ENCODE measurements at regions of chr5 and their contacts with region 1.

Region 1: DNA sequence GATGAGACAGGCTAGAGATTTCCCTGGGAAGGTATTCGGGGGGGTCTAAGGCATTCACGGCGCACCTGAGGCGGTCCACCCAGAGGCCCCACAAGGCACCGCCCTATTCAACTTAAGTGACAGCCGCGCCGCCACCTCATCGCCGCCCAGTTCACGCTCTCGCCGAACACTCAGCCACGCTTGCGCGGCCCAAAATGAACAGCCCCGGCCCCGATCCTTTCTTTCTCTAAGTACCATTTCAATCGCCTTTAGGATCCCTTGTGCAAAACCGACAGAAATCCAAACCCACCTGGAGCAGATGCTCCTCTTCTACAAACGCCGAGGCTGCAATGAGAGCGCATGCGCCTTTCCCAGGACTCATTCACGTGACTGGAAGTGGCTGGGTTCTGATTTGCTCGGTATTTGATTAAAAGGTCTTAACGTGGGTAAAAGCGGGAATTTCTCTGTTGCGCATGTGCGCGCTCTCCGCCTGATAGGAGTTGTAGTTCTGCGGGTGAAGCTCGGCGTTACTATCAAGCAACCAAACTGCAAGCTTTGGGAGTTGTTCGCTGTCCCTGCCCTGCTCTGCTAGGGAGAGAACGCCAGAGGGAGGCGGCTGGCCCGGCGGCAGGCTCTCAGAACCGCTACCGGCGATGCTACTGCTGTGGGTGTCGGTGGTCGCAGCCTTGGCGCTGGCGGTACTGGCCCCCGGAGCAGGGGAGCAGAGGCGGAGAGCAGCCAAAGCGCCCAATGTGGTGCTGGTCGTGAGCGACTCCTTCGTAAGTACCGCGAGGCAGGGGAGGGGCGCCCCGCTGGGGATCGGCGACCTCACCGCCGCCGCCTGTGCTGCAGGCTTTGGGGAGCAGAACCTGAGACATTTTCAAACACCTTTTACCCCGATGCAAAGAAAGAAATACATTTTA is at the starts of genes ARSK and SKIC3:
- DNase-seq: peak; percentile 80 to 99 (median 91)
- ATAC-seq: peak; percentile 86
- H3K4me3 ChIP-seq: peak within 1 kb of the TSS; percentile 64 to 77
- H3K4me3 Mint-ChIP-seq: peak within 1 kb of the TSS; percentile 96
- H3K27ac ChIP-seq: peak within 1 kb of the TSS; percentile 74 to 84
- H3K27ac Mint-ChIP-seq: peak within 1 kb of the TSS; percentile 98
- H3K4me1 ChIP-seq: peaks cover 18% of the 10 kb centered on the region
- H3K4me1 Mint-ChIP-seq: peaks cover 47% of the 10 kb centered on the region
- H3K27me3 ChIP-seq: no peaks in the 10 kb centered on the region
- H3K27me3 Mint-ChIP-seq: no peaks in the 10 kb centered on the region
- CTCF ChIP-seq: no peak
- total RNA-seq, gene ARSK: 2.6 to 3.1 TPM
- total RNA-seq, gene SKIC3: 46.7 to 51.8 TPM

Region 2: DNA sequence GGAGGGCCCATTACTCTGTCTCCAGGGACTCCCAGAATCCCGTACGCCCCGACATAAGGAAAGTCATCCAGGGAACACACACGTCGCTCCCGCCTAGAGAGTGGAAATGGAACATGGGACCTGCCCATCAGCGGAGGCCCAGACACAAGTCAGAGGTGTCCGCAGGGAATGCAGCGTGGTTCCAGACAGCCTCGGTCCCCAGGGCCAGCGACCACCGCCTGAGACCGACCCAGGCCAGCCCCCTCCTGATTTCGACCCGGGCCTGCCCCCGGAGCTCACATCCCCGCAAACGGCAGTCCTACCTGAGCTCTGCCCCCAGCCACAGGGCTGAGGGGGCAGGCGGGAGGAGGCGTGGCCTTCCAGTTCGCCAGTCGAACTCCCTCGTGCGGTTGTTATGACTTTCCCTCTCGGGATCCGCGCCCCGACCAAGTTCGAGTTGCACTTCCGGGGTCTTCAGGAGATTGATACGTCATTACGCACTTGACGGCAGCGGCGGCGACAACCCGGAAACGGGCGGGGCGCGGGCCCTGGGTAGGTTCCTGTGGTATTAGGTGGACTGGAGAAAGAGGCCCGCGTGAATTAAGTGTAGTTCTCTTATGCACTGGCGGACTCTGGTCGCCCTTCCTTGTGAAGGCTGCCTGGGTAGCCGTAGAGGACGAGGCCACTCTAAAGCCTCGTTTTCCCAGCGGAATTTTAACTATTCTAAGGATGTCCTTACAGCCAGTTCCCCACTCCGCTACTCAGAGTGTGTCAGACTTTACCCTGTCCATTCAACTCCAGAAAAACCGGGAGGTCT is 1443.5 kb before region 1 on chr5:
- CTCF ChIA-PET with region 1: no interaction called
- POLR2A ChIA-PET with region 1: no interaction called
- intact Hi-C with region 1: loop called in 1 of 2 experiments (anchors 5 kb)
- DNase-seq: peak; percentile 79 to 95 (median 93)
- ATAC-seq: peak; percentile 94
- H3K4me3 ChIP-seq: peak overlapping the region; percentile 73 to 90
- H3K4me3 Mint-ChIP-seq: peak overlapping the region; percentile 91
- H3K27ac ChIP-seq: peak overlapping the region; percentile 79 to 87
- H3K27ac Mint-ChIP-seq: peak overlapping the region; percentile 95
- H3K4me1 ChIP-seq: peaks cover 8% of the 10 kb centered on the region
- H3K4me1 Mint-ChIP-seq: peaks cover 44% of the 10 kb centered on the region
- H3K27me3 ChIP-seq: no peaks in the 10 kb centered on the region
- H3K27me3 Mint-ChIP-seq: peaks cover 3% of the 10 kb centered on the region
- CTCF ChIP-seq: no peak

Region 3: GRCh38 chr5:95620030-95620869 is 65.4 kb after region 1 on chr5 and contains the start of gene GPR150:
- CTCF ChIA-PET with region 1: interaction called, 4 read pairs
- POLR2A ChIA-PET with region 1: interaction called, 10 read pairs
- intact Hi-C with region 1: loop called (anchors 1 to 2 kb)
- DNase-seq: peak; percentile 32 to 80 (median 61)
- ATAC-seq: peak; percentile 69
- H3K4me3 ChIP-seq: peak within 1 kb of the TSS; percentile 65 to 74
- H3K4me3 Mint-ChIP-seq: peak within 1 kb of the TSS; percentile 89
- H3K27ac ChIP-seq: peak within 1 kb of the TSS in 1 of 2 experiments; percentile 22
- H3K27ac Mint-ChIP-seq: peak within 1 kb of the TSS; percentile 72
- H3K4me1 ChIP-seq: peaks cover 39% of the 10 kb centered on the region
- H3K4me1 Mint-ChIP-seq: peaks cover 46% of the 10 kb centered on the region
- H3K27me3 ChIP-seq: no peaks in the 10 kb centered on the region
- H3K27me3 Mint-ChIP-seq: no peaks in the 10 kb centered on the region
- CTCF ChIP-seq: no peak
- total RNA-seq, gene GPR150: 0.35 TPM in 1 of 2 experiments, not detected in the other

Region 4: GRCh38 chr5:95646554-95647431 is 91.9 kb after region 1 on chr5 and contains the start of gene RFESD:
- CTCF ChIA-PET with region 1: no interaction called
- POLR2A ChIA-PET with region 1: interaction called, 9 read pairs
- intact Hi-C with region 1: loop called (anchors 1 to 2 kb)
- DNase-seq: peak; percentile 86 to 96 (median 93)
- ATAC-seq: peak; percentile 93
- H3K4me3 ChIP-seq: peak within 1 kb of the TSS; percentile 67 to 77
- H3K4me3 Mint-ChIP-seq: peak within 1 kb of the TSS; percentile 91
- H3K27ac ChIP-seq: peak within 1 kb of the TSS; percentile 76 to 85
- H3K27ac Mint-ChIP-seq: peak within 1 kb of the TSS; percentile 94
- H3K4me1 ChIP-seq: peaks cover 20% of the 10 kb centered on the region
- H3K4me1 Mint-ChIP-seq: peaks cover 40% of the 10 kb centered on the region
- H3K27me3 ChIP-seq: no peaks in the 10 kb centered on the region
- H3K27me3 Mint-ChIP-seq: no peaks in the 10 kb centered on the region
- CTCF ChIP-seq: peak; percentile 22
- total RNA-seq, gene RFESD: 1.00 to 1.7 TPM

Region 5: DNA sequence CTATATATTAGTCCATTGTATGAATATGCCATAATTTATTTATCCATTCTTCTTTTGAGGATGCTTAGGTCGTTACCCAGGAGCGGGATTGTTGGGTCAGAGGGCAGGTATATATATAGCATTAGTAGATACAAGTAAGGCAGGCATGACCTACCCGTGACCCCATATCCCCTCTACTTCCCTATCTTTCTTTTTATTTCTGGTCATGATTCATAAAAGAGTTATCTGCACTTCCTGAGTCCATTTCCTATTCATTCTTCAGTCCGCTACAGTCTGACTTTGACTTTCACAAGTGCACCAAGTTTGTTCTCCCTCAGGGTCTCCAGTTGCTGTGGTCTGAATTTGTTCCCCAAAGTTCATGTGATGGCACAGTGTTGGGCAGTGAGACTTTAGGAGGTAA is 183.2 kb after region 1 on chr5:
- CTCF ChIA-PET with region 1: no interaction called
- POLR2A ChIA-PET with region 1: no interaction called
- intact Hi-C with region 1: no loop called
- DNase-seq: no peak
- ATAC-seq: no peak
- H3K4me3 ChIP-seq: no peak overlapping the region
- H3K4me3 Mint-ChIP-seq: no peak overlapping the region
- H3K27ac ChIP-seq: peak overlapping the region in 1 of 2 experiments; percentile 6
- H3K27ac Mint-ChIP-seq: no peak overlapping the region
- H3K4me1 ChIP-seq: no peaks in the 10 kb centered on the region
- H3K4me1 Mint-ChIP-seq: no peaks in the 10 kb centered on the region
- H3K27me3 ChIP-seq: no peaks in the 10 kb centered on the region
- H3K27me3 Mint-ChIP-seq: peaks cover 23% of the 10 kb centered on the region
- CTCF ChIP-seq: no peak

Region 6: DNA sequence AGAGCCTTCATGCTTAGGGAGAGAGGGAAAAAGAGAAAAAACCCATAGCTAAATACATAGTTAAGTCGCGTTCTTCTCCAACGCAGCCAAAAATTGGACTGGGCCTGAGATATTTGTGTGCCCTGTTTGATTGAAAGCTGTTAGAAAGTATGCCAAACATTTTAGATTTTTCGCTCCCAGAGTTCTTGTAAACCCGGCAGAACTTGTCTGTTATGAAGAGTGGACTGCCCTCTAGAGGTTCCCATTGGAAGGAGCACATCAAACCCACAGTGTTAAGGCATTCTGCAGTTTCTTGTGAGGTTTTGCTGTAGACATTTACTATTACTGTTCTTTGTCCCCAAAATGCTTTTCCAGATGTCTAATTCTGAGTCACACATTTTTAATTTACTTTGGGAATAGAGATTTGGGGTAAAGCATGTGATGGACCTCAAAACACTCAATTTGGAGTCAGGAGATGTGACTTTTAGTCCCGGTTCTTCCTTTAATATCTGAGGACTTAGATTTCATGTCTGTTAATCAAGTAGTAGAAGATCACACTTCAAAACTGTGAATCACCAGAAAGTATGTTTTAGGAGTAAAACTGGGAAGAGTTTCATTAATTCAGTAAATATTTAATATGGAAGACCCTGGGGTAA is 781.6 kb after region 1 on chr5:
- CTCF ChIA-PET with region 1: no interaction called
- POLR2A ChIA-PET with region 1: no interaction called
- intact Hi-C with region 1: loop called in 1 of 2 experiments (anchors 10 kb)
- DNase-seq: peak; percentile 19 to 81 (median 57)
- ATAC-seq: peak; percentile 97
- H3K4me3 ChIP-seq: no peak overlapping the region
- H3K4me3 Mint-ChIP-seq: no peak overlapping the region
- H3K27ac ChIP-seq: no peak overlapping the region
- H3K27ac Mint-ChIP-seq: no peak overlapping the region
- H3K4me1 ChIP-seq: no peaks in the 10 kb centered on the region
- H3K4me1 Mint-ChIP-seq: no peaks in the 10 kb centered on the region
- H3K27me3 ChIP-seq: no peaks in the 10 kb centered on the region
- H3K27me3 Mint-ChIP-seq: peaks cover 14% of the 10 kb centered on the region
- CTCF ChIP-seq: peak; percentile 92

Measured in CD8-positive, alpha-beta T cell (primary cell).